BJ (cell line): ENCODE measurements at regions of chr15 and their contacts with region 1.

Region 1: DNA sequence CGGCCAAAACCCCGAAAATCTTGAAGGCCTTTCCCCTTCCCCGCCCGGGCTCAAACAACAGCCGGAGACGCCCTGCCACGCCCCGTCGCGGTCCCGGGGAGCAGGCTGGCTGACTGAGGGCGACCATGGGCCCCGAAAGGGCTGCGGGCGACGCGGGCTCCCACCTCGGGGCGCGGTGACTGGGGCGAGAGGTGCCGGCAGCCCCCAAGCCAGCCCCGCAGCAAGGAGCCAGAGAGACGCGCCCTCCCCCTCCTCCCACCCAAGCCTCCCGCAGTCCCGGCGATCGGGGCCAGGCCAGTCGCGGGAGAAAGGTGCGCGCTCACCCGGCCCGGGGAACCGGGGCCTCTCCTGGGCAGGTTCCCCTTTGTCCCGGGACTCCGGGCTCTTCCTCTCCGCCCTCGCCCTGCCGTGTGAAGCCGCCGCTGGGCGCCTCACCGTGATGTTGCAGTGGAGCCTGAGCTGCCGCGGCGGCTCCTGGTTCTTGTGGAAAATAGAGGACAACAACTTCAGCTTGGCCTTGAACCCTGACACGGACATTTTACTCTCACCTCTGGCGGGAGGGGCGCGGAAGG is 30.6 kb upstream of the ZSCAN2 start:
- DNase-seq: no peak
- H3K4me3 ChIP-seq: peak overlapping the region; percentile 86
- H3K27me3 ChIP-seq: no peaks in the 10 kb centered on the region
- CTCF ChIP-seq: no peak

Region 2: GRCh38 chr15:84582583-84583157 is 12.4 kb after region 1 on chr15:
- CTCF ChIA-PET with region 1: interaction called, 34 read pairs
- POLR2A ChIA-PET with region 1: no interaction called
- DNase-seq: no peak
- H3K4me3 ChIP-seq: no peak overlapping the region
- H3K27me3 ChIP-seq: no peaks in the 10 kb centered on the region
- CTCF ChIP-seq: no peak